ENCODE measurements at regions of chr6 and their contacts with region 1.

Region 1: DNA sequence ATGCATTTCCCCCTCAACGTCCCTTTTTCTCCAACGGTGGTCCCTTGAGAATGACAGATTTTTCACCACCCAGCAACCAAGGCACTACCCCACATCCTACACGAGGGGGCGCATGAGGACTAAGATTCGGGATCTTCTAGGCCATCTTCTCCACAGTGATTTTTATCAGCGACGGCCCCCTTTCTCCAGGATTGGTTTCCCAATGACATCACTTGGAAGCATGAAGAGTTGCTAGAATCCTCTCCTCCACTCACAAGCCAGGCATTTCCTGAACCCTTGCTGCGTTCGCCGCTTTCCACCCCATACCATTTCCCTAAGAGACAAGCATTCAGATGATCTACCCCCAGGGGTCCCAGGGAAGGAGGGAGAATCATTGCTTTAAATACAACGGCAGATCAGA is 252.0 kb downstream of the HIVEP2 start:
- DNase-seq: peak; percentile 43 to 82 (median 62)
- ATAC-seq: peak; percentile 89
- H3K4me3 ChIP-seq: no peak overlapping the region
- H3K4me3 Mint-ChIP-seq: no peak overlapping the region
- H3K27ac ChIP-seq: no peak overlapping the region
- H3K27ac Mint-ChIP-seq: no peak overlapping the region
- H3K4me1 ChIP-seq: peaks cover 8% of the 10 kb centered on the region
- H3K4me1 Mint-ChIP-seq: peaks cover 21% of the 10 kb centered on the region
- H3K27me3 ChIP-seq: no peaks in the 10 kb centered on the region
- H3K27me3 Mint-ChIP-seq: no peaks in the 10 kb centered on the region
- CTCF ChIP-seq: peak; percentile 96

Region 2: GRCh38 chr6:142474531-142475289 is 218.2 kb before region 1 on chr6:
- CTCF ChIA-PET with region 1: interaction called, 5 read pairs
- POLR2A ChIA-PET with region 1: no interaction called
- intact Hi-C with region 1: loop called (anchors 2 to 10 kb)
- DNase-seq: peak in 3 of 14 experiments; percentile 34 to 74 (median 64)
- ATAC-seq: peak; percentile 62
- H3K4me3 ChIP-seq: no peak overlapping the region
- H3K4me3 Mint-ChIP-seq: no peak overlapping the region
- H3K27ac ChIP-seq: no peak overlapping the region
- H3K27ac Mint-ChIP-seq: no peak overlapping the region
- H3K4me1 ChIP-seq: no peaks in the 10 kb centered on the region
- H3K4me1 Mint-ChIP-seq: peaks cover 6% of the 10 kb centered on the region
- H3K27me3 ChIP-seq: no peaks in the 10 kb centered on the region
- H3K27me3 Mint-ChIP-seq: no peaks in the 10 kb centered on the region
- CTCF ChIP-seq: peak; percentile 94

Region 3: DNA sequence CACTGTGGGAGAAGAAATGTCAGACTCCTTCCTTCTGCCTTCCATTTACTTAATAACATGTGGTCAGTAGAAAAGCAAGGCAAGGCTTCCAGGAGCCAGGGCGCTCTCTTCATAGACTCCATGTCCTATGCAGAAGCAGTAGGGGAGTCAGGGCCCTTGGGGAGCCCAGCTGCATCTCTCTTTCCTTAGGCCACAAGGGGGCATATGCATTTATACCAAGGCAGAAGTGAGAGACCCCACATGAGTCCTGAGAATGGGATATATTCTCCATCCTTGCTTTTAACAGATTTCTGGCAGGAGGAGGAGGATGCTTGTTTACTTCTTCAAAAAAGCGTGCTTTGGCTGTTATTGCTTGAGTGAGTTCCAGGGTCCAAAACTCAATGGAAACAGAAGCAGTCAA is 53.6 kb after region 1 on chr6:
- CTCF ChIA-PET with region 1: no interaction called
- POLR2A ChIA-PET with region 1: no interaction called
- intact Hi-C with region 1: loop called in 1 of 2 experiments (anchors 5 kb)
- DNase-seq: peak in 11 of 14 experiments; percentile 7 to 67 (median 15)
- ATAC-seq: peak; percentile 55
- H3K4me3 ChIP-seq: no peak overlapping the region
- H3K4me3 Mint-ChIP-seq: no peak overlapping the region
- H3K27ac ChIP-seq: no peak overlapping the region
- H3K27ac Mint-ChIP-seq: no peak overlapping the region
- H3K4me1 ChIP-seq: peaks cover 6% of the 10 kb centered on the region
- H3K4me1 Mint-ChIP-seq: peaks cover 28% of the 10 kb centered on the region
- H3K27me3 ChIP-seq: no peaks in the 10 kb centered on the region
- H3K27me3 Mint-ChIP-seq: no peaks in the 10 kb centered on the region
- CTCF ChIP-seq: peak; percentile 56

Region 4: DNA sequence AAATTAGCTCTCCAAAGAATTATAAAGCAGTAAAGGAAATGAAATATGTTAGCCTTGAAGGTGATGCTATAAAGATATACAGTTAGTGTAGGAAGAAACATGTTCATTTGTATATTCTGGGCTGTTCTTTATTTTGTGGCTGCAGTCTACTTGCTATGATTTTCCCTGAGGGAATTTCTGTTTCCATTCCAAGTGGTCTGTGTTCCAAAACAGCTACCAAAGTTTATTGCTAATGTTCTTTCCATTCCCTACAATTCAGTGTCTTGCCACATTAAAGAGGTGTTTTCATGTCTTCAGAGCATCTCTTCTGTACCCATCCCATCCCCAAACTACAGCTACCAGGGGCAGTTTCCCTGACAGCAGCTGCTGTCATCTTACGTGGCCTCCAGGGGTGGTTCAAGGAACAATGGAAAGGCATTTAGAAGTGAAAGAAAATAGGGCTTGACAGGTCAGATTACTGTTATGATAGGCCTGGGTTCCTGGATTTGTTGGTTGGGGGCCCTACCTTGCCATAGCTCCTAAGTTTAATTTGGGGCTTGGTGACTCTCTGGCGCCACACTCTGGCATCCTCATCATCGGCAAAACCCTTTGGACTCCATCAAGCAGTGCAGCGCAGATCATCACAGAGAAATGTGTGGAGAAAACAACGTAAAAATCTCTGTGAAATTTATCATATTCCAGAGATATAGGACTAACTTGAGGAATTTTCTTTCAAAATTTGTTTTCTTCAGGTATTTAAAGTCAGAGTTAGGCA is 333.9 kb after region 1 on chr6:
- CTCF ChIA-PET with region 1: interaction called, 11 read pairs
- POLR2A ChIA-PET with region 1: interaction called, 4 read pairs
- intact Hi-C with region 1: loop called (anchors 1 kb)
- DNase-seq: peak; percentile 18 to 72 (median 40)
- ATAC-seq: peak; percentile 60
- H3K4me3 ChIP-seq: no peak overlapping the region
- H3K4me3 Mint-ChIP-seq: no peak overlapping the region
- H3K27ac ChIP-seq: no peak overlapping the region
- H3K27ac Mint-ChIP-seq: no peak overlapping the region
- H3K4me1 ChIP-seq: no peaks in the 10 kb centered on the region
- H3K4me1 Mint-ChIP-seq: no peaks in the 10 kb centered on the region
- H3K27me3 ChIP-seq: no peaks in the 10 kb centered on the region
- H3K27me3 Mint-ChIP-seq: no peaks in the 10 kb centered on the region
- CTCF ChIP-seq: peak; percentile 62

Region 5: DNA sequence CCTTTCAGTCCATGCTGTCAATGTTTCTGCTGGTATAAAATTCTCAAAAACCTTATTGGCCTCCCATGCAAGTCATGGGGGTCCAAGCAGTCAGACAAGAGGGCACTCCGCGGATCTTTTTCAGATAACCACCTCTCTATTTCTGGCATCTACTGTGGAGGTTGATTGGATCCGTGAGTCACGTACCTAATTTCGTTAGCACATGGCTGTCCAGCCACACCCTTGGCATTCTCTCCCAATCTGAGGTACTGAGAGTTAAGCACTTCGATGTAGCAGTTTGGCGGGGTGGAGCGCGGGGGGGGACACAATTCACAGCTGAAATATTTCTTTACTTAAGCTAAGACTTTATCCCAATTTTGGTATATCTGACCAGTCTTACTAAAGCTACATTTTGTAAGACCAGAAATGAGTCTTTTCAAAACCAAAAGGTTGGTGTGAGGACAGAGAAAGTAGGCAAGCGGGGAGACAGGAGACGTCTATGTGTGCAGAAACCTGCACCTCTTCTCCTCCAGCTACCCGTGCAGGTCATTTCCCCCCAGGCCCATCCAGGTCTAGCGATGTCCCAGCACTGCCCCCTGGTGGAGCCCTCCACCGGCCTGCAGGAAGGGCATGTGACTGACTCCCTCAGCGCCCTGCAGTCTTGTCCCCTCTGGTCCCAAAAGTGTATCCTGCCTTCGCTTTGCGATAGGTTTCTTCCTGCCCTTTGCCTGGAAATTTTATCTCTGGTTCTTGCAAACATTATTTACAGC is 644.4 kb after region 1 on chr6:
- CTCF ChIA-PET with region 1: interaction called, 3 read pairs
- POLR2A ChIA-PET with region 1: no interaction called
- intact Hi-C with region 1: loop called in 1 of 2 experiments (anchors 5 kb)
- DNase-seq: peak; percentile 2 to 58 (median 36)
- ATAC-seq: no peak
- H3K4me3 ChIP-seq: no peak overlapping the region
- H3K4me3 Mint-ChIP-seq: no peak overlapping the region
- H3K27ac ChIP-seq: no peak overlapping the region
- H3K27ac Mint-ChIP-seq: no peak overlapping the region
- H3K4me1 ChIP-seq: no peaks in the 10 kb centered on the region
- H3K4me1 Mint-ChIP-seq: no peaks in the 10 kb centered on the region
- H3K27me3 ChIP-seq: no peaks in the 10 kb centered on the region
- H3K27me3 Mint-ChIP-seq: no peaks in the 10 kb centered on the region
- CTCF ChIP-seq: peak; percentile 37

Region 6: DNA sequence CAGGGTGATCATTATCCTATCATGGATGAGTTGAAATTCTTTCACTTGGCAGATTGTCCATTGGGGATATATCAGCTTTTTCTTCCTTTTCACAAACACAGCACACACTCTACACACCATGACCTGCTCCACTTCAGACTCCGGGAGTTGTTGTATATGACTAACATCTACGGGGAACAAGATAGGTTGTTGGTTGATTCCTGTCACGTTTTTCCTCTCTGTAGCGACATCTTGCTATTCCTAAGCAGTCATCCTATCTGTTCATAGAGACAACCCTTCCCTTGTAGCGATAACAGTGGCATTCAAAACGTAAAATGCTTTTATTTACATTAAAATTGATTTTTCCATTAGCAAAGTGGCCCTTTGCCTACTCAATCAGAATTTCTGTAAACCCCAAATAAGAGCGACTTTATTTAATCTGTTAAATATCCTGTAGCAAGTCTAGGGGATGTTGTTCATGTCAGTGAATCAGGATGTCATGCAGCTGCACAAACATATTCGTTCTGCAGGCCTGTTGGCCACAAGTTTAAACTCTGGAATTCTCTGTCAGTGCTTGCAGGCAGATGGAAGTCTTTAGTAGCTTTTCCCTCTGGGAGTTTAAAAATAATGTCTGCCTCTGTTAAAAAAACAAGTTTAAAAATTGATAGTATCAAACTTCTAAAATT is 1007.9 kb after region 1 on chr6:
- CTCF ChIA-PET with region 1: no interaction called
- POLR2A ChIA-PET with region 1: no interaction called
- intact Hi-C with region 1: no loop called
- DNase-seq: no peak
- ATAC-seq: no peak
- H3K4me3 ChIP-seq: no peak overlapping the region
- H3K4me3 Mint-ChIP-seq: no peak overlapping the region
- H3K27ac ChIP-seq: no peak overlapping the region
- H3K27ac Mint-ChIP-seq: no peak overlapping the region
- H3K4me1 ChIP-seq: no peaks in the 10 kb centered on the region
- H3K4me1 Mint-ChIP-seq: peaks cover 20% of the 10 kb centered on the region
- H3K27me3 ChIP-seq: no peaks in the 10 kb centered on the region
- H3K27me3 Mint-ChIP-seq: no peaks in the 10 kb centered on the region
- CTCF ChIP-seq: no peak

Region 7: DNA sequence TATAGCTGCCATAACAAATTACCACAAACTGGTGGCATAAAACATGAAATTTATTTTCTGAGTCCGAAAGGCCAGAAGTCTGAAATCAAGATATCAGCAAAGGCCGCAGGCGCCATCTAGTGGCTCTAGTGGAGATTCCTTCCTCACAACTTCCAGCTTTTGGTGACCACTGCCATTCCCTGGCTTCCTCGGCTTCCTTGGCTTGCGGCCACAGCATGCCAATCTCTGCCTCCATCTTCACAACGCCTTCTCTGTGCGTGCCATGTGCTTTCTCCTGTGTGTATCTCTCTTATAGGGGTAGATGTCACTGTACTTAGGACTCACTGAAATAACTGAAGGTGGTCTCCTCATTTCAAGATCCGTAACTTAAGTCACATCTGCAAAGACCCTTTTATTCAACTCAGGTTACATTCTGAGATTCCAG is 1320.6 kb after region 1 on chr6:
- CTCF ChIA-PET with region 1: no interaction called
- POLR2A ChIA-PET with region 1: no interaction called
- intact Hi-C with region 1: loop called in 1 of 2 experiments (anchors 10 kb)
- DNase-seq: peak; percentile 43 to 80 (median 55)
- ATAC-seq: peak; percentile 52
- H3K4me3 ChIP-seq: no peak overlapping the region
- H3K4me3 Mint-ChIP-seq: no peak overlapping the region
- H3K27ac ChIP-seq: no peak overlapping the region
- H3K27ac Mint-ChIP-seq: no peak overlapping the region
- H3K4me1 ChIP-seq: peaks cover 1% of the 10 kb centered on the region
- H3K4me1 Mint-ChIP-seq: no peaks in the 10 kb centered on the region
- H3K27me3 ChIP-seq: peaks cover 0 to 2% of the 10 kb centered on the region in 2 experiments
- H3K27me3 Mint-ChIP-seq: peaks cover 27% of the 10 kb centered on the region
- CTCF ChIP-seq: peak; percentile 98